ENCODE measurements at regions of chr3 and their contacts with region 1.

Region 1: DNA sequence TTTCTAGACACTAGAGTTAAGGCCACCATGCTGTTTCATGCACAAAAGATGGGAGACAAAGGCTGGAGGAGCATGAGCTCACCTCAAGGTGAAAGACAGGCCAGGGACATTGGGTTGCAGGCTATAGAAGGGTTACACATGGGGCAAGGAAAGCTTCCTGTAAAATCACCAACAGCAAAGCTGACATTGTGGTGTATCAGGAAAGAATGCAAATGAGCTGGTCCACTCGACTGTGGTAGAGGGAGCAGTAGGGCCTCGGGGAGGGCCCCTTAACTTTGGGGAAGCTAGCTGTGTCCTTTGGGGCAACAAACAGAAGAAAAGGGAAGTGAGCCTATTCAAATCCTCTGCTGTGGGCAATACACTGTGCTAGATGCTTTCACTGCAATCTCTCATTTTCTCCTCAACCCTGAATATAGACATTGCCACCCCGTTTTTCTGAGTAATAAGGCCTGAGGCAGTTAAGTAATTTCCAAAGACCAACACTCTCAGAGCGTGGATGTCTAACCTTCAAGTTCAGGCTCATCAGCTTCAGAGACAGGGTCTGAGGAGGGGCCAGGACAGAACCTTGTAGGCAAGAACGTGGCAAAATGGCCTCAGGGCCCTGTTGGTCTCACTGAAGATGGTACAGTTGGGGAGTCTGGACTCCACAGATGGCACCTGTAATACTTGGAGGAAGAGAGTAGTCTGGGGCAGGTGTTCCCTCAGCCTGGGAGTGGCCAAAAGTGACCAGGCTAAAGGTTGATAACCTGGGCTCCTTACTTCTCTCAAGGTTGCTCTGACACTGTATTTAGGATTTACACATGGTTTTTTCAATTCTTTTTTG is 24.1 kb downstream of the CX3CR1 start:
- DNase-seq: peak; percentile 90
- ATAC-seq: peak; percentile 97
- H3K4me3 ChIP-seq: peak overlapping the region in 2 of 5 experiments; percentile 21 to 35
- H3K4me3 Mint-ChIP-seq: peak overlapping the region; percentile 81
- H3K27ac ChIP-seq: peak overlapping the region; percentile 77 to 79
- H3K27ac Mint-ChIP-seq: peak overlapping the region; percentile 97
- H3K4me1 ChIP-seq: peaks cover 79 to 82% of the 10 kb centered on the region in 2 donors
- H3K4me1 Mint-ChIP-seq: peaks cover 82% of the 10 kb centered on the region
- H3K27me3 ChIP-seq: peaks cover 0 to 3% (median 0%) of the 10 kb centered on the region in 4 experiments
- H3K27me3 Mint-ChIP-seq: peaks cover 4% of the 10 kb centered on the region
- CTCF ChIP-seq: no peak

Region 2: DNA sequence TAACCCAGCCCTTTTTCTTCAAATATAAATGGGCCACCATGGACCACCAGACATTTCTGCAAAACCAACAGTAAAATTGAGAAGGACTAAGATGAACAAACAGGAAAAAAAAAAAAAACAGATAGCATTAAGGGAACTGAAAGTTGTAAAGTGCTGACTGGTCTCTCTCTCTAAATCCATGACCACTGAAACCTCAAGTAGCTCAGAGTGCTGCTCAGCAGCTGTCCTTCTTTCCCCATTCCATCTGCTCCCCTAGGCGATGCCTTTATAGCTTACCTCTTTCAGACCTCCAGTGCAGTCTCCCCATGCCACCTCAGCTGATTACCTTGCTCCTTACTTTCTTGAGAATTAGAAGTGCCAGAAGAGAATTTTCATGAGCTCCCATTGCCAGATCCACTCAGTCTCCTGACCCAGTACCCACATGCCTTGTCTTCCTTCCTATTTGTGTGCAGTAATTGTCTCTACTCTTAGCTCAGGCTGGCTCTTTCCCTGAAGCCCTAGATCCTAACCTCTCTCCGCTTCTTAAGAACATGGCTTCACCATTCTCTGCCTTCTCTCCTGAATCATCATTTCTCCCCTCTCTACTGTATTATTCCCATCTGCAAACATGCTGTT is 39.4 kb before region 1 on chr3:
- CTCF ChIA-PET with region 1: interaction called, 7 read pairs
- POLR2A ChIA-PET with region 1: interaction called, 5 read pairs
- intact Hi-C with region 1: loop called (anchors 1 kb)
- DNase-seq: peak; percentile 78
- ATAC-seq: peak; percentile 90
- H3K4me3 ChIP-seq: no peak overlapping the region
- H3K4me3 Mint-ChIP-seq: peak overlapping the region; percentile 50
- H3K27ac ChIP-seq: no peak overlapping the region
- H3K27ac Mint-ChIP-seq: peak overlapping the region; percentile 29
- H3K4me1 ChIP-seq: peaks cover 24 to 32% of the 10 kb centered on the region in 2 donors
- H3K4me1 Mint-ChIP-seq: peaks cover 31% of the 10 kb centered on the region
- H3K27me3 ChIP-seq: peaks cover 0 to 9% (median 0%) of the 10 kb centered on the region in 4 experiments
- H3K27me3 Mint-ChIP-seq: peaks cover 3% of the 10 kb centered on the region
- CTCF ChIP-seq: no peak

Region 3: DNA sequence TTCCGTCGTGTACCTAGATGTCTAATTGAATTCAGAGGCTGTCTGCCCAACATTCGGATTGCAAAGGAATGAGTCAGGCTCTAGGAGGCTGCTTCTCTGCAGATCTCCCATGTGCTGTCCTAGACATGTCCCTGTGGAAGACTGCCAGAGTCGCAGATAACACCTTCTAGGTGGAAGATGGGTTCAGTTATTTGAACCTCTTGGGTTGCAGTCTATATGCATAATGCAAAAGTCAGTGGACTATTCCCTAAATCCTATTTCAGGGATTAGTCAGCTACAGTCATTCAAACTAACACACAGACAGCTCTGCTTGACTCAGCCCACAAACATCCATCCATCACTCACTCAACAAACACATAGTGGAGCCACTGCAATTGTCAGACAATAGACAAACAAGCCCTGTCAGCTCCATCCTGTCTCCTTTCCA is 1643.6 kb after region 1 on chr3:
- CTCF ChIA-PET with region 1: no interaction called
- POLR2A ChIA-PET with region 1: no interaction called
- intact Hi-C with region 1: no loop called
- DNase-seq: no peak
- ATAC-seq: no peak
- H3K4me3 ChIP-seq: no peak overlapping the region
- H3K4me3 Mint-ChIP-seq: no peak overlapping the region
- H3K27ac ChIP-seq: no peak overlapping the region
- H3K27ac Mint-ChIP-seq: no peak overlapping the region
- H3K4me1 ChIP-seq: no peaks in the 10 kb centered on the region
- H3K4me1 Mint-ChIP-seq: no peaks in the 10 kb centered on the region
- H3K27me3 ChIP-seq: no peaks in the 10 kb centered on the region
- H3K27me3 Mint-ChIP-seq: peaks cover 3% of the 10 kb centered on the region
- CTCF ChIP-seq: no peak